ENCODE measurements at regions of chr12 and their contacts with region 1.

Region 1: GRCh38 chr12:93911396-93911795 is 234.2 kb downstream of the CRADD start:
- DNase-seq: no peak
- H3K4me3 ChIP-seq: no peak overlapping the region
- CTCF ChIP-seq: no peak

Region 2: DNA sequence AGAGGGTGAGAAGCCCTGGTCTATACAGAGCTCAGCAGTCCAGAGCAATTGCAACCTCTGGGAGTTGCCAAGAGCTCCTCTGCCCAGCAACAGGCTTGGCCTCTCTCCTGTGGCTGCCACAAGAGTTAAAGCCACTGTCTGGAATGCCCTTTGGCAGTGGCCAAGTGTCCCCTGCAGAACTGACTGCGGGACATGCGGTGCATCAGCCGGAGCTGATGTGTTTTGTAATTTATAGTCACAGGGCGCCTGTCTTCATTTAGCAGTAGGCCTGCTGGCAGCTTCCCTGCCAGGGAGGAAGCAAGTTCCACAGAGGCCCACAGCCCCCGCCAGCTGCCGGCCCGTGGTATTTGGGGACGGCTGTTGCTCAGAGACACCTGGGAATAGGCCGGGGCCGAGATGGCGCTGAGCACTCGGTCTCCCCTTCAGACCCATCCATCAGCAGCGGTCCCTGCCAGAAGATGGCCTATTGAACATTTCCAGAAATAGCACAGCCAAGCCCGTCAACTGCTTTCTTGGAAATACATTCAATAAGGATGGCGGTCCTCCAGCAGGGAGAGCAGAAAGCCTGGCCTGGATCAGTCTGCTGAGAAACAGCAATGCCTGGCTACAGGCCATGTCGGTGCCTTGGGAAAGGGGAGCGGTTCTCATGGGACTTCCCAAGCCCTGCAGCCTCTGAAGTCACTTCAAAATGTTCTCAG is 16.9 kb before region 1 on chr12:
- CTCF ChIA-PET with region 1: interaction called, 15 read pairs
- POLR2A ChIA-PET with region 1: no interaction called
- DNase-seq: no peak
- H3K4me3 ChIP-seq: no peak overlapping the region
- CTCF ChIP-seq: no peak

Measured in AG04449 (cell line).